SK-N-SH (cell line): ENCODE measurements at regions of chrX and their contacts with region 1.

Region 1: DNA sequence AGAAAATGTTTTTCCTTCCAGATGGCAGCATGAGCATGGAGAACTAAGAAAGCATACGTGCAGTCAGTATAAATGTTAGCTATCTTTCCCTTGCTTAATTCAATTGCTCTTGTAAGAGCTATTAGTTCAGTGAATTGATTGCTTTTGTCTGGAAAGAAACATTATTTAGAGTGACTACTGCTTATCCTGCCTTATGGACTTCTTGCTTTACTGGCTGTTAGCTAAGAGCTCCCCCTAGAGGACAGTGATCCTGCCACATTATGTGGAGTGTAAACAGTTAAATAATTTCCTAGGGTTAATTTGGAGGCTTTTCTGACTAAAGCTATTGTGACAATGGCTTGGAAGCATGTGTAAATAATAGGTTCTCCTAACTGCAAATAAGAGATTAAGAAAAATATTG is 1402.4 kb downstream of the FAM133A start:
- DNase-seq: peak; percentile 0
- H3K4me3 ChIP-seq: no peak overlapping the region; a peak in 1 of 4 replicates
- H3K27ac ChIP-seq: no peak overlapping the region
- H3K4me1 ChIP-seq: no peaks in the 10 kb centered on the region
- H3K27me3 ChIP-seq: no peaks in the 10 kb centered on the region; the same call in 1 of the 2 replicates
- CTCF ChIP-seq: peak; percentile 90
- EP300 ChIP-seq: no peak
- RAD21 ChIP-seq: peak; percentile 68

Region 2: DNA sequence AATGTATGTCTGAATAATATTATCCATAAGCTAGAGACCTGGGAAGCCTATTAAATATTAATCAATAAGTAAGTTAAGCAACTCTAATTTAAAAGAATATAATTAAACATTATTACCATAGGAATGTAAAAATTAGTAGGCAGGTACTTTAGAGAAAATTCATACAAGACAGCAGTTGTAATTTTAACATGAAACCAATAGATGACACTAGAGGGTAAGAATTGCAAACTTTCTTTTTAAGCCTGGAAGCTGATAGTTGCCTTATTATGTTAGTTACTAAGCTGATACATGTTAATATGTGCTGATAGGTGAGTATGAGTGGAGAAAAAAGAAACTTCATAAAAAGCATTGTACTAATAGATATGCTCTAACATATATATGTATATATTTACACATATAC is 245.1 kb before region 1 on chrX:
- CTCF ChIA-PET with region 1: interaction called, 12 read pairs
- POLR2A ChIA-PET with region 1: no interaction called
- DNase-seq: peak; percentile 3
- H3K4me3 ChIP-seq: no peak overlapping the region
- H3K27ac ChIP-seq: no peak overlapping the region
- H3K4me1 ChIP-seq: no peaks in the 10 kb centered on the region
- H3K27me3 ChIP-seq: no peaks in the 10 kb centered on the region
- CTCF ChIP-seq: peak; percentile 66
- EP300 ChIP-seq: no peak
- RAD21 ChIP-seq: peak; percentile 76

Region 3: DNA sequence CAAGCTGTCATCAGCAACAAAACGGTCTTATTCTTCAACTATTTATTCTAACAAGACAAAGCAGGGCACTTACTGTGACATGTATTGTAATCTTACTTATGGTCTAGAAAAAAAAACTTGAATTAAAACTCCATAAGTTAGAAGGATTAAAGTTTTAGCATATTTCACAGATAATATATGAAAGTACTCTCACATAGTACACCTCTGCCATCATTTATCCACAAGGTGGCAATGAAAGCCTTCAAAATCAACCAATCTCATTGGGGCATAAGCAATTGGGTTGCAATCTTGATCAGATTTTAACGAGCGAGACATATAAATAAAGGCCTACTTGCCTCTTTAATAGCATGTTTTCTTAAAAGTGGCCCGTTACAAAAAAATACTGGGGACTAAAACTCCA is 19.5 kb before region 1 on chrX:
- CTCF ChIA-PET with region 1: interaction called, 12 read pairs
- POLR2A ChIA-PET with region 1: no interaction called
- DNase-seq: no peak
- H3K4me3 ChIP-seq: no peak overlapping the region
- H3K27ac ChIP-seq: peak overlapping the region in 1 of 2 experiments; percentile 5; a peak in 1 of 4 replicates
- H3K4me1 ChIP-seq: peaks cover 0 to 5% of the 10 kb centered on the region in 2 experiments; a peak in 1 of 4 replicates
- H3K27me3 ChIP-seq: no peaks in the 10 kb centered on the region
- CTCF ChIP-seq: peak; percentile 64
- EP300 ChIP-seq: no peak
- RAD21 ChIP-seq: peak; percentile 47

Region 4: GRCh38 chrX:95945528-95945927 is 869.1 kb after region 1 on chrX:
- CTCF ChIA-PET with region 1: no interaction called
- POLR2A ChIA-PET with region 1: no interaction called
- DNase-seq: no peak
- H3K4me3 ChIP-seq: no peak overlapping the region
- H3K27ac ChIP-seq: no peak overlapping the region
- H3K4me1 ChIP-seq: no peaks in the 10 kb centered on the region
- H3K27me3 ChIP-seq: no peaks in the 10 kb centered on the region
- CTCF ChIP-seq: no peak
- EP300 ChIP-seq: no peak
- RAD21 ChIP-seq: no peak